CD8-positive, alpha-beta T cell (primary cell): ENCODE measurements at regions of chr6 and their contacts with region 1.

Region 1: GRCh38 chr6:122471107-122472021 is at the start of gene SERINC1:
- DNase-seq: peak; percentile 86 to 98 (median 93)
- ATAC-seq: peak; percentile 93
- H3K4me3 ChIP-seq: peak within 1 kb of the TSS; percentile 92 to 94
- H3K4me3 Mint-ChIP-seq: peak within 1 kb of the TSS; percentile 99
- H3K27ac ChIP-seq: peak within 1 kb of the TSS; percentile 99
- H3K27ac Mint-ChIP-seq: peak within 1 kb of the TSS; percentile 100
- H3K4me1 ChIP-seq: peaks cover 35% of the 10 kb centered on the region
- H3K4me1 Mint-ChIP-seq: peaks cover 46% of the 10 kb centered on the region
- H3K27me3 ChIP-seq: no peaks in the 10 kb centered on the region
- H3K27me3 Mint-ChIP-seq: no peaks in the 10 kb centered on the region
- CTCF ChIP-seq: no peak
- total RNA-seq, gene SERINC1: 222 to 228 TPM

Region 2: GRCh38 chr6:122381497-122382265 is 89.7 kb before region 1 on chr6:
- CTCF ChIA-PET with region 1: interaction called, 6 read pairs
- POLR2A ChIA-PET with region 1: interaction called, 3 read pairs
- intact Hi-C with region 1: loop called in 1 of 2 experiments (anchors 1 kb)
- DNase-seq: peak; percentile 27 to 84 (median 62)
- ATAC-seq: peak; percentile 100
- H3K4me3 ChIP-seq: no peak overlapping the region
- H3K4me3 Mint-ChIP-seq: no peak overlapping the region
- H3K27ac ChIP-seq: no peak overlapping the region
- H3K27ac Mint-ChIP-seq: no peak overlapping the region
- H3K4me1 ChIP-seq: no peaks in the 10 kb centered on the region
- H3K4me1 Mint-ChIP-seq: peaks cover 6% of the 10 kb centered on the region
- H3K27me3 ChIP-seq: no peaks in the 10 kb centered on the region
- H3K27me3 Mint-ChIP-seq: no peaks in the 10 kb centered on the region
- CTCF ChIP-seq: peak; percentile 81

Region 3: GRCh38 chr6:122408702-122409458 is 62.5 kb before region 1 on chr6:
- CTCF ChIA-PET with region 1: interaction called, 3 read pairs
- POLR2A ChIA-PET with region 1: interaction called, 12 read pairs
- intact Hi-C with region 1: loop called in 1 of 2 experiments (anchors 1 kb)
- DNase-seq: peak in 2 of 9 experiments; percentile 37 to 69
- ATAC-seq: peak; percentile 87
- H3K4me3 ChIP-seq: peak overlapping the region; percentile 19 to 44
- H3K4me3 Mint-ChIP-seq: peak overlapping the region; percentile 79
- H3K27ac ChIP-seq: peak overlapping the region; percentile 43 to 77
- H3K27ac Mint-ChIP-seq: peak overlapping the region; percentile 90
- H3K4me1 ChIP-seq: peaks cover 71% of the 10 kb centered on the region
- H3K4me1 Mint-ChIP-seq: peaks cover 83% of the 10 kb centered on the region
- H3K27me3 ChIP-seq: no peaks in the 10 kb centered on the region
- H3K27me3 Mint-ChIP-seq: no peaks in the 10 kb centered on the region
- CTCF ChIP-seq: no peak

Region 4: DNA sequence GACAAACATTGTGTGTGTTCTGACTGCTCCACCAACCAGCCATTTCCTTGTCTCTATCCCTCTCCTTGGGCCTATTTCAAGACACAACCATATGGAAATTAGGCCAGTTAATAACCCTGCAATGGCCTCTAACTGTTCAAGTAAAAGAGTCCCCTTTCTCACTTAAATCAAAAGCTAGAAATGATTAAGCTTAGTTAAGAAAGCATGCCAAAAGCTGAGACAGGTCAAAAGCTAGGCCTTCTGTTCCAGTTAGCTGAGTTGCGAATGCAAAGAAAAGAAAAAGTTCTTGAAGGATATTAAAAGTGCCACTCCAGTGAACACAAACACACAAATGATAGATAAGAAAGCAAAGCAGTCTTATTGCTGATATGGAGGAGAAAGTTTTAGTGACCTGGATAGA is 22.3 kb before region 1 on chr6:
- CTCF ChIA-PET with region 1: no interaction called
- POLR2A ChIA-PET with region 1: interaction called, 5 read pairs
- intact Hi-C with region 1: loop called in 1 of 2 experiments (anchors 2 kb)
- DNase-seq: no peak
- ATAC-seq: no peak
- H3K4me3 ChIP-seq: no peak overlapping the region
- H3K4me3 Mint-ChIP-seq: no peak overlapping the region
- H3K27ac ChIP-seq: no peak overlapping the region
- H3K27ac Mint-ChIP-seq: peak overlapping the region; percentile 45
- H3K4me1 ChIP-seq: no peaks in the 10 kb centered on the region
- H3K4me1 Mint-ChIP-seq: peaks cover 30% of the 10 kb centered on the region
- H3K27me3 ChIP-seq: no peaks in the 10 kb centered on the region
- H3K27me3 Mint-ChIP-seq: no peaks in the 10 kb centered on the region
- CTCF ChIP-seq: no peak

Region 5: DNA sequence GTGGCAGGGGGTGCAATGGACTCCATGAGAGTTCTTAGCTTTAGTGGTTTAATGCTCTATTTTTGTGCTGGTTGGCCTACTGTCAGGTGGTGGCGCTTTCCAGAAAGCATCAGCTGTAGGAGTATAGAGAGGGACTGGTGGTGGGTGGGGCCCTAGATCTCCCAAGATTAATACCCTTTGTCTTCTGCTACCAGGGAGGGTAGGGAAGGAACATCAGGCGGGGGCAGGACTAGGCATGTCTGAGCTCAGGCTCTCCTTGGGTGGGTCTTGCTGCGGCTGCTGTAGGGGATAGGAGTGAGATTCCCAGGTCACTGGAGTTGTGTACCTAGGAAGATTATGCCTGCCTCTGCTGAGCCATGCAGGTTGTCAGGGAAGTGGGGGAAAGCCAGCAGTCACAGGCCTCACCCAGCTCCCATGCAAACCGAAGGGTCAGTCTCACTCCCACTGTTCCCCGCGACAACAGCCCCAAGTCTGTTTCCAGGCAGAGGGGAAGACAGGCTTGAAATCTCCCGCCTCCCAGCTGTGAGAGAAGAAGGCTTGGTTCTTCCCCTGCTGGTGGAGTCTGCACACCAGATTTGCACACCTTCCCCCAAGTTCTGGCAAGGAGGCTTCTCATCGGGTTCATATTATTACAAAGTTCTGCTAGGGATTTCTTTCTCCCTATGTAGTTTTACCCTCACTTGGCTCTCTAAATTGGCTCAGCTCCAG is 92.2 kb after region 1 on chr6:
- CTCF ChIA-PET with region 1: no interaction called
- POLR2A ChIA-PET with region 1: no interaction called
- intact Hi-C with region 1: no loop called
- DNase-seq: no peak
- ATAC-seq: no peak
- H3K4me3 ChIP-seq: no peak overlapping the region
- H3K4me3 Mint-ChIP-seq: no peak overlapping the region
- H3K27ac ChIP-seq: no peak overlapping the region
- H3K27ac Mint-ChIP-seq: no peak overlapping the region
- H3K4me1 ChIP-seq: no peaks in the 10 kb centered on the region
- H3K4me1 Mint-ChIP-seq: no peaks in the 10 kb centered on the region
- H3K27me3 ChIP-seq: no peaks in the 10 kb centered on the region
- H3K27me3 Mint-ChIP-seq: peaks cover 11% of the 10 kb centered on the region
- CTCF ChIP-seq: no peak

Region 6: GRCh38 chr6:123316733-123317323 is 845.5 kb after region 1 on chr6:
- CTCF ChIA-PET with region 1: no interaction called
- POLR2A ChIA-PET with region 1: no interaction called
- intact Hi-C with region 1: loop called (anchors 5 kb)
- DNase-seq: peak in 1 of 9 experiments; percentile 12
- ATAC-seq: no peak
- H3K4me3 ChIP-seq: no peak overlapping the region
- H3K4me3 Mint-ChIP-seq: no peak overlapping the region
- H3K27ac ChIP-seq: no peak overlapping the region
- H3K27ac Mint-ChIP-seq: no peak overlapping the region
- H3K4me1 ChIP-seq: no peaks in the 10 kb centered on the region
- H3K4me1 Mint-ChIP-seq: no peaks in the 10 kb centered on the region
- H3K27me3 ChIP-seq: no peaks in the 10 kb centered on the region
- H3K27me3 Mint-ChIP-seq: no peaks in the 10 kb centered on the region
- CTCF ChIP-seq: peak; percentile 50